ENCODE measurements at regions of chr12 and their contacts with region 1.

Region 1: GRCh38 chr12:8629486-8630033 is 16.9 kb upstream of the AICDA start:
- DNase-seq: no peak
- ATAC-seq: peak; percentile 74
- H3K4me3 Mint-ChIP-seq: peak overlapping the region; percentile 24
- H3K27ac Mint-ChIP-seq: peak overlapping the region; percentile 56
- H3K4me1 Mint-ChIP-seq: peaks cover 12% of the 10 kb centered on the region
- H3K27me3 Mint-ChIP-seq: no peaks in the 10 kb centered on the region
- CTCF ChIP-seq: no peak

Region 2: GRCh38 chr12:8644345-8645248 is 15.0 kb after region 1 on chr12:
- CTCF ChIA-PET with region 1: interaction called, 3 read pairs
- POLR2A ChIA-PET with region 1: interaction called, 12 read pairs
- intact Hi-C with region 1: no loop called
- DNase-seq: no peak
- ATAC-seq: peak; percentile 59
- H3K4me3 Mint-ChIP-seq: peak overlapping the region; percentile 32
- H3K27ac Mint-ChIP-seq: peak overlapping the region; percentile 84
- H3K4me1 Mint-ChIP-seq: peaks cover 41% of the 10 kb centered on the region
- H3K27me3 Mint-ChIP-seq: no peaks in the 10 kb centered on the region
- CTCF ChIP-seq: no peak